Panc1 (cell line): ENCODE measurements at regions of chr12 and their contacts with region 1.

Region 1: GRCh38 chr12:101323255-101323654 is 43.4 kb downstream of the UTP20 start:
- DNase-seq: no peak
- ATAC-seq: no peak
- H3K4me3 ChIP-seq: no peak overlapping the region
- H3K27ac ChIP-seq: no peak overlapping the region
- H3K4me1 ChIP-seq: no peaks in the 10 kb centered on the region
- H3K27me3 ChIP-seq: no peaks in the 10 kb centered on the region
- CTCF ChIP-seq: no peak

Region 2: DNA sequence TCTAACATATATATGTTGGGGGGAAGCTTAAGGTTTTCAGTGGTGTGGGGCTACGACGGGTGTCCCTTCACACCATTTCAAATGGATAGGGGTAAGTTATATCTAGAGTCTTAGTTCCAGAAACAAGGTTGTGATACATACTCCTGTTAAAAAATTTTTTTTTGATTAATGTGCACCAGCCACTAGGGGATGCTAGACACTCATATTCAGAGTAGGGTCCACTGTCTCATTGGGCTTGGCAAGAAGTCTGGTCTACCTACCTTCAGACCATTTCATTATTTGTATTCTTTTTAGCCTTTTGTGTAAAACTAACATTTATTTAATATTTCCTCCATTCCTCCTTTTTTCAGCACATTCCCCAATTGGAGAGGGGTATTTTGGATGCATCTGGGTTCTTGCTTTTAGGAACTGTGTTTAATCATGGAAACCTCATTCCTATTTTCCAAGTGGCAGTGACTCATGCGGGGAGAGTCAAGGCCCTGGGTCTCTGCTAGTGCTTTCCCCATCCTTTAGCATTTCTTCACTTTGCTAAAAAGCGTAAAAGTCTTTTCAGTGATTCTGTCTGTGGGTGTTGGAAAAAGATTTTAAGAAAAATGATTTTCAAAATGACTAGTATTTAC is 495.2 kb before region 1 on chr12:
- CTCF ChIA-PET with region 1: no interaction called
- POLR2A ChIA-PET with region 1: no interaction called
- in situ Hi-C with region 1: no loop called
- intact Hi-C with region 1: loop called (anchors 5 kb)
- DNase-seq: peak; percentile 17
- ATAC-seq: peak; percentile 60; the same call in 1 of the 2 replicates
- H3K4me3 ChIP-seq: no peak overlapping the region
- H3K27ac ChIP-seq: no peak overlapping the region
- H3K4me1 ChIP-seq: no peaks in the 10 kb centered on the region
- H3K27me3 ChIP-seq: no peaks in the 10 kb centered on the region; the same call in 1 of the 2 replicates
- CTCF ChIP-seq: peak; percentile 80

Region 3: DNA sequence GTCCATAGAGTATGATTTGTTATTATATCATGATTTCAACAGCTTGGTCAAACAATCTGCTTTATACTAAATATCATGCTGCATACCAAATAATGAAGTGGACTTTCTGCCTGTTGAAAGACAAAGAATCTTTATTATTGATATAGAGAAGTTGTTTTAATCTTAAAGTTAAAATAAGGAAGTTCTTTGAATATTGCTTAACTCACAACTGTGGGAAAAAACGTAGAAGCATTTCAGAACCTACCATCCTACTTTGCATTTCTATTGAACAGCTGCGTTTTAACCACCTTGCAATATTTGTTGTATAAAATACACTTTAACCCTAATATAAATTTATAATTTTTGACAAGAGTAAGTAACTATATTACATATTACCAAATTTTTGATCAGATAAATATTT is 107.2 kb after region 1 on chr12:
- CTCF ChIA-PET with region 1: no interaction called
- POLR2A ChIA-PET with region 1: no interaction called
- in situ Hi-C with region 1: no loop called
- intact Hi-C with region 1: no loop called
- DNase-seq: no peak
- ATAC-seq: no peak
- H3K4me3 ChIP-seq: no peak overlapping the region
- H3K27ac ChIP-seq: no peak overlapping the region
- H3K4me1 ChIP-seq: no peaks in the 10 kb centered on the region
- H3K27me3 ChIP-seq: no peaks in the 10 kb centered on the region; the same call in 1 of the 2 replicates
- CTCF ChIP-seq: no peak

Region 4: DNA sequence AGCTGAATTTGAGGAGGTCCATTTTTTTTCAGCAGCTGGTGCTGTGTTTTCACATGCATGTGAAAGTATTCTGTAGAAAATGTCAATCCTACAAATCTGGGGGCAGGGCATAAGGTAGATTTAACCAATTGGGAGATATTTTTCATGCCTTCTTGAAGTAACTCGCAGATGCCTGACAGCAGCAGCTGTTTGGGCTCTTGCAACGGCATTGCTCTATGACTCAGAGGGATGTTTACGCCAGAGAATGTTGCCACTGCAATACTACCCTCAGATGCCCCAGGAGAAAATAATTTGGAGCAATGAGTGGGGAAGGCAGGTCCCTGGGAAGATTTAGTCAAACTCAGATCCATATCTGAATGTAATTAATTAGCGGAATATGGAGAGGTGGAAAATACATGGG is 229.0 kb after region 1 on chr12:
- CTCF ChIA-PET with region 1: no interaction called
- POLR2A ChIA-PET with region 1: no interaction called
- in situ Hi-C with region 1: no loop called
- intact Hi-C with region 1: no loop called
- DNase-seq: no peak
- ATAC-seq: no peak
- H3K4me3 ChIP-seq: no peak overlapping the region
- H3K27ac ChIP-seq: no peak overlapping the region
- H3K4me1 ChIP-seq: no peaks in the 10 kb centered on the region
- H3K27me3 ChIP-seq: no peaks in the 10 kb centered on the region
- CTCF ChIP-seq: no peak